Activated T-helper 2 cell treated with anti-CD3 and anti-CD28 coated beads, Interferon-gamma antibody, Interleukin-2, Interleukin-4, amounts not matched to agents 10 μg/mL and 5 μg/mL and 100 μg/mL, durations not matched to agents 14 hours and 24 hours and 36 hours (primary cell): ENCODE measurements at regions of chr6 and their contacts with region 1.

Region 1: DNA sequence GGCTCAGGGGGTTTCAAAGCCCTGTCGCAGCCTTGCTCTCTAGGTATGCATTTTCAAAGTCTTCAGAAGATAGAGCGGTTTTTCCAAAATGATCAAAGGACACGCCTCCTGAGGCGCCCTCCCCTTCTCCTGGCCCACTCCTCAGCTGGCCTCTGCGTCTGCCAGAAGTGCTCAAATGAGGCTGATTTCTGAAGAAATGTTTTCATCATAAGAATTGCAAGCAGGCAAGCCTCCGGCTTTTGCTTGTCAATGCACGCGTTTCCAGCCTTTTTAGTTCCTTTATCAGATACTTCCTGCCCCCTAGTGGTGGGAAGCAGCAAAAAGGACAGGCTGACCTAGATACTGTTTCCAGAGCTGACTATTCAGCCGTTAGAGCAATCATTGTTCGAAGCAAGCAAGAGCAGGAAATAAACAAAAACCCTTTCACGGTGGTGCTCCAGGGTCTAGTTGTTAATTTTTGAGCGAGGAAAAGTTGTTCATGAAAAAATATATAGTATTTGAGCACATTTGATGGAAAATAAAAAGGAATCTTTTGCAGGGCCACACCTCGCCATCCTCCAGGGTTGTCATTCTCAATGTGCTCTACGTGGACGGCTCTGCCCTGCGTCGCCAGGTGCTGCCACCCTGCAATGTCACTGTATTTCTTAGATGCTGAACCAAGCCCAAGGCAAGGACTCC is 93.4 kb upstream of the ASF1A start:
- DNase-seq: peak; percentile 75
- H3K4me3 Mint-ChIP-seq: peak overlapping the region; percentile 1
- H3K27ac Mint-ChIP-seq: peak overlapping the region; percentile 31
- H3K4me1 Mint-ChIP-seq: peaks cover 27% of the 10 kb centered on the region
- H3K27me3 Mint-ChIP-seq: no peaks in the 10 kb centered on the region

Region 2: DNA sequence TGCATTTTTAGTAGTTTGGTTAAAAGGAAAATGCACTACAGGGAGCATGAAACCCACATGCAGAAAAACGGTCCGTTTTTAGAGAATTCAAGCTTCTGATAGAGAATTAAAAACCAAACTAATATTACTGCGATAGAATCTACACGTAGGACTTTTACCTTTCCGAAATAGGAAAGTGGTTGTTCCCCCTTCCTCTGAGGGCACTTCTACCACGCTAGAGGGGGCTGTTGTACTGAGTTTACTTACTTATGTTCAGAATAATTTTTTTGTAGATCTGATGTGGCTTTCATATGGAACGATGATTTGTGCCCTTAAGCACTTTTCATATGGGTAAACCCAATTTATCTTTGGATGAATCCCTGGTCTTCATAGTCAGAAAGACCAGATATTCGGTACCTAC is 516.8 kb before region 1 on chr6:
- intact Hi-C with region 1: loop called (anchors 2 kb)
- DNase-seq: no peak
- H3K4me3 Mint-ChIP-seq: no peak overlapping the region
- H3K27ac Mint-ChIP-seq: no peak overlapping the region
- H3K4me1 Mint-ChIP-seq: peaks cover 6% of the 10 kb centered on the region
- H3K27me3 Mint-ChIP-seq: peaks cover 26% of the 10 kb centered on the region

Region 3: DNA sequence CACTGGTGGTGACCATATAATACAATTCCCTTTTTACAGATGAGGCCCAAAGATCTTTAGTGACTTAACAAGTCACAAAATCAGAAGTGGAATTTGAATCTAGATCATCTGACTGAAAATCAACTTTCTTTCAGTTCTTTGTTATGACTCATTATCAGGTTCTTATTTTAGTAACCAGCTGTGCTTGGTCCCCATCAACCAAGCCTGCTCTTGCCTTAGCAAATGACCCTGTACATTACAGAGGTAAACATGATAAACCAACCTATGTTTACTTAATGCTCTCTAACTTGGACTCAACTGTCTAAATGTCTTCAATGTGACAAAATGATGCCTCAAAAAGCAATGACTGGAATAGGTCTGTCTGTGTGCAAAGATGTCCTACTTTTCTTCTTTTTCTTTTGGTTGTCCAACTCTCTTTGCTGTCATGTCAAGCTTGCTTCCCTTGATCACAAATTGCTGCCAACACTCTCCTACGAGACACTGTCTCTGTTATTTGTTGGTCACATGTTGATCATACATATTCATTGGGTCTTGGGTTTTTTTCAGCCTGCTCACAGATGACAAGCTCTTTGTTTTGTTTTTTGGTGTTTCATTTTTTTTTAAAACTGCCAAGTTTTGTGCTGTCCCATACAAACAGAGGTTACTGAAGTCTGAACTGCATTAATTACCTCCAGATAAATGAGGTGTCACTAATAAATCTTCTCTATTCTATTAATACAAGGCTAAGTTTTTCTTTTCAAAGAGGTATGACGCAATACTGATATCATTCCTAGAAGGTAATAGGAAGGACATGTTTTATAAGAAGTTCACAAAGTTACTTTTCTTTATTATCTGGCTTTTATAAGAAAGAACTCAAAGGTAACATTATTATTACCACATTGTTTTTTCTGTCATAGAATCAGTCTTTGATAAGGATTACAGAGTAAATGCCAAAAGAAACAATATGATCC is 314.7 kb before region 1 on chr6:
- intact Hi-C with region 1: loop called (anchors 10 kb)
- DNase-seq: no peak
- H3K4me3 Mint-ChIP-seq: no peak overlapping the region
- H3K27ac Mint-ChIP-seq: peak overlapping the region; percentile 14
- H3K4me1 Mint-ChIP-seq: peaks cover 20% of the 10 kb centered on the region
- H3K27me3 Mint-ChIP-seq: no peaks in the 10 kb centered on the region

Region 4: DNA sequence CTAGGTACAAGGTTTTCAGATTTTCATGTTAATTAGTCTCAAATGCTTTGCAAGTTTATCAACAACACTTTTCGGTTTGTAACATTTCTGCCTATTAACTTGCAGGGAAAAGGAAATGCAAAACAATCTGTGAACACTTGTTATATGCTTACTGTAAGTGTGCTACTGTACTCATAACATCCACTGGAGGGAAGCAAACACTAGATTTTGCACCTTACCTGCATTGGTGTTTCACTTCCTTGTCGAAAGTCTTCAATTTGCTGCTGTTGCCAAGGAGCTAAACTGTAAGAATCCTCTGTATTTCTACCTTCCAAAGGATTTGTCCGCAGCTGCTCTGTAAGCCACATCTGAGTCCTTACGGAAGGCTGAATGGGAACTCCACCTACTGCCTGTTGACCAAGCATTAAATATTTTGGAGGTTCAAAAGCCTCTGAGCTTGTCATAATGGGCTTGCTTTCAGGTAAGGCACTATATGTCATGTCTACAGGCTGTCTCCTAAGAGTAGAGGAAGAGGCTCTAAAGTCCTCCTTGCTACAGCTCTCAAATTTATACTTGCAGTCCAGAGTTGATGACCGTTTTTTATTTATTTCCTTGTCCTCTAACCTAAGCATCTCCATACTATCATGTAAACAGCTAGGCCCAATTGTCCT is 235.1 kb before region 1 on chr6:
- intact Hi-C with region 1: loop called (anchors 10 kb)
- DNase-seq: no peak
- H3K4me3 Mint-ChIP-seq: no peak overlapping the region
- H3K27ac Mint-ChIP-seq: no peak overlapping the region
- H3K4me1 Mint-ChIP-seq: peaks cover 20% of the 10 kb centered on the region
- H3K27me3 Mint-ChIP-seq: no peaks in the 10 kb centered on the region

Region 5: GRCh38 chr6:118784641-118785164 is 15.8 kb before region 1 on chr6:
- intact Hi-C with region 1: no loop called
- DNase-seq: no peak
- H3K4me3 Mint-ChIP-seq: no peak overlapping the region
- H3K27ac Mint-ChIP-seq: no peak overlapping the region
- H3K4me1 Mint-ChIP-seq: peaks cover 9% of the 10 kb centered on the region
- H3K27me3 Mint-ChIP-seq: peaks cover 3% of the 10 kb centered on the region